ENCODE measurements at regions of chr22 and their contacts with region 1.

Region 1: GRCh38 chr22:26665813-26666231 is 8.4 kb downstream of the MIAT start:
- DNase-seq: no peak
- ATAC-seq: no peak
- H3K4me3 ChIP-seq: no peak overlapping the region
- H3K4me3 Mint-ChIP-seq: peak overlapping the region; percentile 50
- H3K27ac ChIP-seq: no peak overlapping the region
- H3K27ac Mint-ChIP-seq: peak overlapping the region; percentile 27
- H3K4me1 ChIP-seq: peaks cover 33 to 64% of the 10 kb centered on the region in 2 donors
- H3K4me1 Mint-ChIP-seq: peaks cover 66% of the 10 kb centered on the region
- H3K27me3 ChIP-seq: no peaks in the 10 kb centered on the region
- H3K27me3 Mint-ChIP-seq: no peaks in the 10 kb centered on the region
- CTCF ChIP-seq: peak; percentile 19

Region 2: GRCh38 chr22:26502688-26503561 is 162.9 kb before region 1 on chr22:
- CTCF ChIA-PET with region 1: interaction called, 21 read pairs
- POLR2A ChIA-PET with region 1: interaction called, 3 read pairs
- intact Hi-C with region 1: no loop called
- DNase-seq: peak; percentile 80
- ATAC-seq: peak; percentile 81
- H3K4me3 ChIP-seq: no peak overlapping the region
- H3K4me3 Mint-ChIP-seq: no peak overlapping the region
- H3K27ac ChIP-seq: peak overlapping the region in 1 of 2 donors; percentile 67
- H3K27ac Mint-ChIP-seq: peak overlapping the region; percentile 42
- H3K4me1 ChIP-seq: peaks cover 13 to 14% of the 10 kb centered on the region in 2 donors
- H3K4me1 Mint-ChIP-seq: peaks cover 17% of the 10 kb centered on the region
- H3K27me3 ChIP-seq: no peaks in the 10 kb centered on the region
- H3K27me3 Mint-ChIP-seq: no peaks in the 10 kb centered on the region
- CTCF ChIP-seq: peak; percentile 71

Region 3: GRCh38 chr22:26679003-26679629 is 13.3 kb after region 1 on chr22:
- CTCF ChIA-PET with region 1: interaction called, 18 read pairs
- POLR2A ChIA-PET with region 1: interaction called, 3 read pairs
- intact Hi-C with region 1: no loop called
- DNase-seq: peak; percentile 73
- ATAC-seq: peak; percentile 87
- H3K4me3 ChIP-seq: no peak overlapping the region
- H3K4me3 Mint-ChIP-seq: no peak overlapping the region
- H3K27ac ChIP-seq: no peak overlapping the region
- H3K27ac Mint-ChIP-seq: peak overlapping the region; percentile 72
- H3K4me1 ChIP-seq: peaks cover 25 to 40% of the 10 kb centered on the region in 2 donors
- H3K4me1 Mint-ChIP-seq: peaks cover 48% of the 10 kb centered on the region
- H3K27me3 ChIP-seq: no peaks in the 10 kb centered on the region
- H3K27me3 Mint-ChIP-seq: no peaks in the 10 kb centered on the region
- CTCF ChIP-seq: peak; percentile 90

Region 4: GRCh38 chr22:26718905-26719304 is 53.1 kb after region 1 on chr22:
- CTCF ChIA-PET with region 1: no interaction called
- POLR2A ChIA-PET with region 1: no interaction called
- intact Hi-C with region 1: no loop called
- DNase-seq: no peak
- ATAC-seq: no peak
- H3K4me3 ChIP-seq: no peak overlapping the region
- H3K4me3 Mint-ChIP-seq: no peak overlapping the region
- H3K27ac ChIP-seq: no peak overlapping the region
- H3K27ac Mint-ChIP-seq: no peak overlapping the region
- H3K4me1 ChIP-seq: no peaks in the 10 kb centered on the region
- H3K4me1 Mint-ChIP-seq: no peaks in the 10 kb centered on the region
- H3K27me3 ChIP-seq: no peaks in the 10 kb centered on the region
- H3K27me3 Mint-ChIP-seq: no peaks in the 10 kb centered on the region
- CTCF ChIP-seq: no peak

Measured in B cell (primary cell).